ENCODE measurements at regions of chr5 and their contacts with region 1.

Region 1: GRCh38 chr5:164504141-164504772 is 998.8 kb downstream of the MAT2B start:
- DNase-seq: no peak
- H3K4me3 Mint-ChIP-seq: no peak overlapping the region
- H3K27ac Mint-ChIP-seq: no peak overlapping the region
- H3K4me1 Mint-ChIP-seq: no peaks in the 10 kb centered on the region
- H3K27me3 Mint-ChIP-seq: no peaks in the 10 kb centered on the region

Region 2: DNA sequence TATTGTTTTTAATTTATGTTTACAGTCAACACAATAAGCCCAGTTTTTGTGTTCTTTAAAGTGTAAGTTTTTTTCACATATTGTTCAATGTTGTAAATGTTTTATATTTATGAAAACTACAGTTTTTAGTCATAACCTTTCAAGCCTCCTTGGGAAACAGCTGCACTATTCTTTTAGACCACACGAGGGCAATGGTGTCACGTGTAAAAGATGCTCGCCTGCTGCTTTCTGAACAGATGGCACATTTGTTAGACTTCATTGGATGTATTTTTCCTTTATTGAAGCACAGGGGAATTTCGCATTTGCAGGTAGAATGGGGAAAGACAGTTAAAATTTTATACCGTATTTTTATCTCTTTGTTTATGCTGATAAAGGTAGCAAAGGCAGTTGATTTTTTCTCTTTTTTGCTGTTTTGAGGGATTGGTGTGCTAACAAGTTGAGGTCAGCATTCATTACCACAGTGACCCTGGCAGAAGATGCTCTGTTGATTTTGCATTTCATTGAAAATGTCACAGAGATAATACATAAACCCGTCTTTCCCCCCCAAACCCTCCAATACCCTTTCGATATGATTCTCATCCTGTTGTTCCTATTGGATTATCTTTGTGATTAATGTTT is 939.8 kb before region 1 on chr5:
- CTCF ChIA-PET with region 1: interaction called, 11 read pairs
- POLR2A ChIA-PET with region 1: no interaction called
- DNase-seq: peak; percentile 66
- H3K4me3 Mint-ChIP-seq: no peak overlapping the region
- H3K27ac Mint-ChIP-seq: no peak overlapping the region
- H3K4me1 Mint-ChIP-seq: peaks cover 22% of the 10 kb centered on the region
- H3K27me3 Mint-ChIP-seq: peaks cover 56% of the 10 kb centered on the region

Region 3: DNA sequence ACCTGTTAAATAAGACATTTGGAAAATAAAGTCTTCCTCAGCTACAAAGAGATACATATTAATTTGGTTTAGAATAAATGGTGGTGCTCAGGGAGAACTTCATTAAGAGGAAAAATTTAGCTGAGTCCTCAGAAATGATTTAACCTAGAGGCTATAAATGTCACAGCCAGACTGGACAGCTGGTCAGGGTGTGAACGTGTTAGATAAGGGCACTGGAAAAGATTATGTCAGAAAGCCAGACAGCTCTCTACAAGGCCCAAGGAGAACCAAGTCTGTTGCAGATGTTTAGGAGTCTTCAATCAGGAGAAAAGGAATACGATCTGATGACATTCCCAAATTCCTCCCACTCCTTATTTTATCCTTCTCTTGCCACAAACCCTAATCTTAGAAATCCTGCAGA is 733.6 kb before region 1 on chr5:
- CTCF ChIA-PET with region 1: no interaction called
- POLR2A ChIA-PET with region 1: no interaction called
- DNase-seq: no peak
- H3K4me3 Mint-ChIP-seq: no peak overlapping the region
- H3K27ac Mint-ChIP-seq: no peak overlapping the region
- H3K4me1 Mint-ChIP-seq: no peaks in the 10 kb centered on the region
- H3K27me3 Mint-ChIP-seq: no peaks in the 10 kb centered on the region

Measured in activated CD4-positive, alpha-beta memory T cell treated with anti-CD3 and anti-CD28 coated beads, Interleukin-2, amount 10 ng/mL, durations not matched to agents 7 days and 5 days (primary cell).